ENCODE measurements at regions of chr7 and their contacts with region 1.

Region 1: GRCh38 chr7:134789967-134790685 is 10.7 kb downstream of the CALD1 start:
- DNase-seq: peak; percentile 63
- H3K4me3 ChIP-seq: peak overlapping the region; percentile 10
- H3K27ac ChIP-seq: peak overlapping the region; percentile 59
- H3K27me3 ChIP-seq: no peaks in the 10 kb centered on the region
- CTCF ChIP-seq: no peak

Region 2: DNA sequence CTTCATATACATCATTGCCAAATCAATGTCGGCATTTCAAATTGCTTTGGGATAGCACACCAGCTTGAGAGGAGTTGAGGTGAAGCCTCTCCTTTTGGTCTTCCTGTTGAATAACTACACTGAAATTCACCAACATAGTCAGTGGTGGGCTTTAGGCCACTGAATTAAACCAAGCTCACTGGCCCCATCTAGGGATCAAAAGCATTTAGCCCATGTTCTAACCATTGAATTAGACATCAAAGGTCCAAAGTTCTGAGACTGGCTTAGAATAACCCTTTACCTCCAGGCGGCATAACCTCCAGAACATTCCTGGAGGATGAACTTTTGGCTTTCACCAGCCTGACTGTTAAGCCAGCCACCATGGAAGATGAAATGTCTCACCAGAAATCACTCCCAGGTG is 88.9 kb before region 1 on chr7:
- CTCF ChIA-PET with region 1: no interaction called
- POLR2A ChIA-PET with region 1: interaction called, 10 read pairs
- DNase-seq: no peak
- H3K4me3 ChIP-seq: no peak overlapping the region
- H3K27ac ChIP-seq: no peak overlapping the region
- H3K27me3 ChIP-seq: no peaks in the 10 kb centered on the region
- CTCF ChIP-seq: peak; percentile 57

Region 3: GRCh38 chr7:134778941-134779740 is 11.0 kb before region 1 on chr7 and contains the start of gene CALD1:
- CTCF ChIA-PET with region 1: interaction called, 8 read pairs
- POLR2A ChIA-PET with region 1: interaction called, 20 read pairs
- DNase-seq: peak; percentile 99
- H3K4me3 ChIP-seq: peak within 1 kb of the TSS; percentile 71
- H3K27ac ChIP-seq: peak within 1 kb of the TSS; percentile 97
- H3K27me3 ChIP-seq: no peaks in the 10 kb centered on the region
- CTCF ChIP-seq: no peak
- polyA plus RNA-seq, gene CALD1: 578 and 804 TPM in 2 replicates

Region 4: GRCh38 chr7:134813663-134814396 is 23.7 kb after region 1 on chr7:
- CTCF ChIA-PET with region 1: no interaction called
- POLR2A ChIA-PET with region 1: no interaction called
- DNase-seq: peak; percentile 65
- H3K4me3 ChIP-seq: no peak overlapping the region
- H3K27ac ChIP-seq: peak overlapping the region; percentile 25
- H3K27me3 ChIP-seq: no peaks in the 10 kb centered on the region
- CTCF ChIP-seq: no peak

Measured in AG04450 (cell line).